Activated B cell treated with CpG ODN at 0.5 μM for 24 hours (primary cell): ENCODE measurements at regions of chr21 and their contacts with region 1.

Region 1: GRCh38 chr21:42537106-42537742 is 23.6 kb downstream of the SLC37A1 start:
- DNase-seq: no peak
- ATAC-seq: no peak
- H3K4me3 Mint-ChIP-seq: peak overlapping the region; percentile 24
- H3K27ac Mint-ChIP-seq: peak overlapping the region; percentile 90
- H3K4me1 Mint-ChIP-seq: peaks cover 56% of the 10 kb centered on the region
- H3K27me3 Mint-ChIP-seq: no peaks in the 10 kb centered on the region
- CTCF ChIP-seq: no peak

Region 2: DNA sequence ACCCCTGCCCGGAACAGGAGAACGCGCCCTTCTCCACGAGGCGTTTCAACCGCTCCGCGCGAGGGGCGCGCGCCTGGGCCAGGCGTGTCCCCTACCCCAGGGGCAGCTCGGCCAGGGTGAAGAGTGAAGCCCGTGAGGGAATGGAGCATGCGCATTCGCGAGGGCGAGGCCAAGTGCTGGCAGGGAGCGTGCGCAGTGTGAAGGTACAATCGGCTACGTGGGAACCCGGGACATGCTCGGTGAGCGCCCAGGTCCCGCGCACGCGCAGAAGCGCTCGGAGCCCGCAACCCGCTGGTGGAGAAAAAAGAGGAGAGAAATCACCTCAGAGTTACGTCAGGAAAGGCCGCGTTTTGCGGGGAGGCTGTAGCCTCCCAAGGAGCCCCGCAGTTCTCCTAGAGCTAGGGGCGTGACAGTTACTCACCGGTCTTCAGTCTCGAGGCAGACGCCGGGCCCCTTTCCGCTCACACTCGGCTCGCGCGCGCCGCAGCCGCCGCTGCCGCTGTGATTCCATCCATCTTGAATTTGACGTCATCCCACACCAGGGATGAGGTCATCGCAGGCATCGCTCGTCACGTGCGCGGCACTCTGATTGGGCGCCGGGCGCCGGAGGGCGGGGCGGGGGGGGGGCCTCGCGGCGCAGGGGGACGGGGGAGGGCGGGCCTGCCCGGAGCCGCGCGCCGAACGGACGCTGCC is 527.2 kb before region 1 on chr21 and contains the start of gene ZBTB21:
- CTCF ChIA-PET with region 1: no interaction called
- POLR2A ChIA-PET with region 1: no interaction called
- intact Hi-C with region 1: loop called (anchors 10 kb)
- DNase-seq: peak; percentile 97
- ATAC-seq: peak; percentile 79
- H3K4me3 Mint-ChIP-seq: peak within 1 kb of the TSS; percentile 98
- H3K27ac Mint-ChIP-seq: peak within 1 kb of the TSS; percentile 100
- H3K4me1 Mint-ChIP-seq: peaks cover 36% of the 10 kb centered on the region
- H3K27me3 Mint-ChIP-seq: no peaks in the 10 kb centered on the region
- CTCF ChIP-seq: no peak
- total RNA-seq, gene ZBTB21: 24.2 and 25.4 TPM in 2 replicates

Region 3: DNA sequence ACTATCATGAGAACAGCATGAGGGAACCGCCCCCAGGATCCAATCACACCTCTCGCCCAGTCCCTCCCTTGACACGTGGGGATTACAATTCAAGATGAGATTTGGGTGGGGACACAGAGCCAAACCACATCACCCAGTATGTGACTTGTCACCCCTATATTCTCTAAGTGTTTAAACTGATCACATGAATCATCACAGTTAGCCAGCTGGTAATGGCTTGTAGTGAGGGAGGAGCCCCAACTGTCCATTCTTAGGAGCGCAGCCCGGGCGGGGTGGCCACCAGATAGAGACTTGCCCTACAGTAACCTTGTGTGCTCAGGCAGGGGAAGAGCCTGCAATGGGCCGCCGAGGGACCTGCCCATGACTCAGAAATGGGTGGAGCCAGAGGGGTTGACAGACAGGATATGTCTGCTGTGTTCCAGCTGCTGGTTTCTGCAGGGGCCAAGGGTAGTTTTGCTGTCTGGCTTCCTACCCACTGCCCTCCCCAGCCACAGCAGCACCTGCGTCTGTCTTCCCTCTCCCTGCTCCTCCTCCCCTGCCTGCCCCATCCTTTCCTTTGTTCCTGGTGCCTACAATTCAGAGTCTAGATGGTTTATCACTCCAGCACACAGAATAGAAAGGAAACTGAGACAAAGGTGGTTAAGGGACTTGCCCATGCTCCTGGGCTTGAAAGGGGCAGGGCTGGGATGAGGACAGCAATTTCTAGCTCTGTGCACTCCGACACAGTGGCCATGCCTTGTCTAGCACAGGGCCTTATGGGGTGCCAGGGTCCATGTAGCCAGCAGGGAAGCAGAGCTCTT is 309.1 kb before region 1 on chr21:
- CTCF ChIA-PET with region 1: no interaction called
- POLR2A ChIA-PET with region 1: interaction called, 3 read pairs
- intact Hi-C with region 1: loop called (anchors 5 kb)
- DNase-seq: peak; percentile 78
- ATAC-seq: peak; percentile 96
- H3K4me3 Mint-ChIP-seq: peak overlapping the region; percentile 45
- H3K27ac Mint-ChIP-seq: peak overlapping the region; percentile 70
- H3K4me1 Mint-ChIP-seq: peaks cover 63% of the 10 kb centered on the region
- H3K27me3 Mint-ChIP-seq: no peaks in the 10 kb centered on the region
- CTCF ChIP-seq: no peak

Region 4: DNA sequence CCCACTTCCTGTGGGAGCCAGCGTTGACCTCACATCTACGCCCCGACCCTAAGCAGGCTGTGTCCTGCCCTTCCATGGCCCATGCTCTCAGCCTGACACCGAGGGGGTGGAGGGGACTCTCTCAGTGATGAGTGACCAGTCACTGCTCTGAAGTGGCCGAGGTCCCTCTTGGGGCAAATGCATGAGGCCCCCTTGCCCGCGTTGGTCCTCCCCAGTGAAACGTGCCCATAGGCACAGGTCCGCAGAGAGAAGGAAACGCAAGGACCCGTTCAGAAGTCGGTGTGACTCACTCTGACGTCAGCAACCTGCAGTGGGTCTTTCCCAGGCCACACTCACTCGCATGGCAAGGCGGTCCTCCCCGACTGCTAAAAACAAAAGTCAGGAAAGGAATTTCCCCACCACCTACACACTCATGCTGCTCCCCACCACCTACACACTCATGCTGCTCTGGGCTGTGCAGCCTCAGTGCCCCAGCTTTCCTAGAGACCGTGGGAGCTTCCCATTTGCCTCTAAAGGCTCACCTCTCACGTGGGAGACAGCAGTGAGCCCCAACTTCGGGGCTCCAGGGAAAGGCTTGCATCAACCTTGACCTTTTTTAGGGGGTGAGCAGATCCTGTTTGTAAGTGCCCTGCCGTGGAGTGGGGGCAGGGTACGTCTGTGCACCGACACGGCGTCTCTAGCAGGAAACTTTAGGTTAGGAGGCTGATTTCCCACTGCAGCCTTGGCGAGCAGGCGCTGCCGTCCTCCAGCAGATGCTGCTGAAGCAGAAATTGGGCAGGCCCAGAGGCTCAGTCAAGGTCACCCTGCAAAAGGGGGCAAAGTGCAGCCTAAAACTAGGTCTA is 122.1 kb before region 1 on chr21:
- CTCF ChIA-PET with region 1: no interaction called
- POLR2A ChIA-PET with region 1: no interaction called
- intact Hi-C with region 1: loop called (anchors 1 kb)
- DNase-seq: peak; percentile 62
- ATAC-seq: peak; percentile 86
- H3K4me3 Mint-ChIP-seq: peak overlapping the region; percentile 70
- H3K27ac Mint-ChIP-seq: peak overlapping the region; percentile 84
- H3K4me1 Mint-ChIP-seq: peaks cover 38% of the 10 kb centered on the region
- H3K27me3 Mint-ChIP-seq: peaks cover 4% of the 10 kb centered on the region
- CTCF ChIP-seq: no peak

Region 5: GRCh38 chr21:42467140-42467983 is 69.9 kb before region 1 on chr21:
- CTCF ChIA-PET with region 1: interaction called, 38 read pairs
- POLR2A ChIA-PET with region 1: interaction called, 6 read pairs
- intact Hi-C with region 1: loop called (anchors 1 kb)
- DNase-seq: peak; percentile 13
- ATAC-seq: no peak
- H3K4me3 Mint-ChIP-seq: peak overlapping the region; percentile 6
- H3K27ac Mint-ChIP-seq: no peak overlapping the region
- H3K4me1 Mint-ChIP-seq: peaks cover 69% of the 10 kb centered on the region
- H3K27me3 Mint-ChIP-seq: peaks cover 3% of the 10 kb centered on the region
- CTCF ChIP-seq: no peak

Region 6: DNA sequence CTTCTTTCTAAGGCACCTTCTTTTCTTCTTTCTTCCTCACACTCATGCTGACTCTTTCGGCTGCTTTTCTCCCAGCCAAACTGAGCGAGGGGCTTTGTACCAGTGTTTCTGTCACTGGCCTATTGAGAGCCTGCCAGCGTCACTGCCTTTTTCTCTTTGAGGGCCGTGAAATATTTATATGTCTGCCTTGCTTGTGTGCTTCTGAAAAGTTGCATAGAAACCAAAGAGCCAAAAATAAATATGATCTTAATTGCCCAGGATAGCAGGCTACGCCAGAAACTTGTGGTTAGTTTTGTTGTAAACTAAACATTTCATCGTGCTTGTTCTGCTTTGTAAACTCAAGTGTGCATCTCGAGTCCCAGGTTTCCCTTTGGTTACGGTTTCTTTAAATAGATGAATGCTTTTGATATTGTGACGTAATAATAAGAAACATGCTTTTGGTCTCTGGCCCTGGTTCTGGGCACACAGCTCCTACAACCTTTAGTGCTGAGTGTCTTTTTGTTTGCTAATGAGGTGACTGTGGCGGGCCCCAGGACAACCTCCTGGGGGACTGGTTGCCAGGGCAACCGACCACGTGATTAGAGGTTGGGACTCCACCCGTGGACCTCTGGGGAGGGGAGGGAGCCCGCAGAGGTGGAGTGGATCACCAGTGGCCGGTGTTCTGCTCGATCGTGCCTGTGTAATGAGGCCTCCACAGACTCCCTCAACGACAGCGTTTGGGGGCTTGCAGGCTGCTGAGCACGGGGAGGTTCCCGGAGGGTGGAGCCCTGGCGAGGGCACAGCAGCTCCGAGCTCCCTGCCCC is 12.7 kb before region 1 on chr21:
- CTCF ChIA-PET with region 1: interaction called, 5 read pairs
- POLR2A ChIA-PET with region 1: interaction called, 82 read pairs
- intact Hi-C with region 1: loop called (anchors 1 kb)
- DNase-seq: peak; percentile 90
- ATAC-seq: peak; percentile 83
- H3K4me3 Mint-ChIP-seq: peak overlapping the region; percentile 78
- H3K27ac Mint-ChIP-seq: peak overlapping the region; percentile 95
- H3K4me1 Mint-ChIP-seq: peaks cover 87% of the 10 kb centered on the region
- H3K27me3 Mint-ChIP-seq: no peaks in the 10 kb centered on the region
- CTCF ChIP-seq: no peak